ENCODE measurements at regions of chr20 and their contacts with region 1.

Region 1: GRCh38 chr20:8131598-8132483 is at the start of gene PLCB1:
- DNase-seq: peak; percentile 85
- H3K4me3 Mint-ChIP-seq: peak within 1 kb of the TSS; percentile 76
- H3K27ac Mint-ChIP-seq: no peak within 1 kb of the TSS
- H3K4me1 Mint-ChIP-seq: peaks cover 17% of the 10 kb centered on the region
- H3K27me3 Mint-ChIP-seq: peaks cover 33% of the 10 kb centered on the region
- total RNA-seq, gene PLCB1: 3.9 to 4.0 TPM

Region 2: GRCh38 chr20:7935027-7935551 is 196.8 kb before region 1 on chr20:
- CTCF ChIA-PET with region 1: no interaction called
- POLR2A ChIA-PET with region 1: no interaction called
- intact Hi-C with region 1: loop called (anchors 10 kb)
- DNase-seq: no peak
- H3K4me3 Mint-ChIP-seq: no peak overlapping the region
- H3K27ac Mint-ChIP-seq: no peak overlapping the region
- H3K4me1 Mint-ChIP-seq: no peaks in the 10 kb centered on the region
- H3K27me3 Mint-ChIP-seq: peaks cover 11% of the 10 kb centered on the region

Region 3: DNA sequence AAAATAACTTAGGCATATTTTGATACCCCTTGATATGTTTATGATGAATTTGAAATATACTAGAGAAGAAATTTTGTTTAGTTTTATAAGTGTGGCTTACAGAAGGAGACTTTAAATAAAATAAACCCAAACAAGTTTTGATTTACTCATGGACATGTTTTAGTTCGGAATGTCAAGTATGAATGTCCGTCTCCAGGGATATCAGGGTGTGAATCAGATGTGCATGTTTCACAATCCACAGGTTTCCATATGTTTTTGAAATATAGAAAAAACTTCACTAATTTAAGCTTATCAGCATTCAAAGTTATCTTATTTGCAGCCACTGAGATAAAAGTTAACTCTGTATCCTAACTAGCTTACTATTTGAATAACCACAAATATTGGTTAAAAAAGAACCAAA is 51.7 kb after region 1 on chr20:
- CTCF ChIA-PET with region 1: no interaction called
- POLR2A ChIA-PET with region 1: no interaction called
- intact Hi-C with region 1: no loop called
- DNase-seq: no peak
- H3K4me3 Mint-ChIP-seq: no peak overlapping the region
- H3K27ac Mint-ChIP-seq: no peak overlapping the region
- H3K4me1 Mint-ChIP-seq: no peaks in the 10 kb centered on the region
- H3K27me3 Mint-ChIP-seq: no peaks in the 10 kb centered on the region

Region 4: DNA sequence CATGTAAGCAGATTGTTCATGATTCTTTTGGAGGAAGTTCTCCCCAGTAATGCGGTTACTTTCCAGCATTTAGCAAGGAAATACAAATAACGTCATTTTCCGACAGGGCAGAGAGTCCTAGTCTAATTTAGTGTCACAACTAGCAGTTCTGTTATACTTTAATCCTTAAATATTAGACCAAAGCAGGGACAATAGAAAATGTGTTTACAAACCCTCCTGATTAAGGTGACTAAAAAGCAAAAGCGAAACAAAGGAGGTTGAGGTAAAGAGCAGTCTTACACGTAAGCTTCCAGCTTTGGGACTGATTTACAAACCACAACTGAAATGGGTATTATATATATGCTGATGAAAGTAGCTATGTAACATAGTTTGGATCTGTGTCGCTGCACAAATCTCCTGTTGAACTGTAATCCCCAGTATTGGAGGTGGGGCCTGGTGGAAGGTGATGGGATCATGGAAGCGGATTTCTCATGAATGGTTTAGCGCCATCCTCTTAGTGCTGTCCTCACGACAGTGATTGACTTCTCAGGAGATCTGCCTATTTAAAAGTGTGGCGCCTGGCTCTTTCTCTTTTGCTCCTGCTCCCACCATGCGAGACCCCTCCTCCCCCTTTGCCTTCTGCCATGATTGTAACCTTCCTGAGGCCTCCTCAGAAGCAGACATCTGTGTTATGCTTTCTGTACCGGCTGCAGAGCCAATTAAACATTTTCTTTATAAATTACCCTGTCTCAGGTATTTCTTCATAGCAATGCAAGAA is 82.2 kb after region 1 on chr20:
- CTCF ChIA-PET with region 1: no interaction called
- POLR2A ChIA-PET with region 1: interaction called, 6 read pairs
- intact Hi-C with region 1: loop called (anchors 5 kb)
- DNase-seq: no peak
- H3K4me3 Mint-ChIP-seq: peak overlapping the region; percentile 55
- H3K27ac Mint-ChIP-seq: peak overlapping the region; percentile 24
- H3K4me1 Mint-ChIP-seq: peaks cover 45% of the 10 kb centered on the region
- H3K27me3 Mint-ChIP-seq: peaks cover 2% of the 10 kb centered on the region

Region 5: GRCh38 chr20:8305449-8305978 is 173.7 kb after region 1 on chr20:
- CTCF ChIA-PET with region 1: interaction called, 7 read pairs
- POLR2A ChIA-PET with region 1: no interaction called
- intact Hi-C with region 1: loop called (anchors 1 kb)
- DNase-seq: peak; percentile 75
- H3K4me3 Mint-ChIP-seq: no peak overlapping the region
- H3K27ac Mint-ChIP-seq: no peak overlapping the region
- H3K4me1 Mint-ChIP-seq: peaks cover 6% of the 10 kb centered on the region
- H3K27me3 Mint-ChIP-seq: no peaks in the 10 kb centered on the region

Region 6: GRCh38 chr20:8389381-8390036 is 257.7 kb after region 1 on chr20:
- CTCF ChIA-PET with region 1: interaction called, 15 read pairs
- POLR2A ChIA-PET with region 1: no interaction called
- intact Hi-C with region 1: loop called (anchors 1 kb)
- DNase-seq: no peak
- H3K4me3 Mint-ChIP-seq: no peak overlapping the region
- H3K27ac Mint-ChIP-seq: no peak overlapping the region
- H3K4me1 Mint-ChIP-seq: no peaks in the 10 kb centered on the region
- H3K27me3 Mint-ChIP-seq: no peaks in the 10 kb centered on the region